ENCODE measurements at regions of chr6 and their contacts with region 1.

Region 1: DNA sequence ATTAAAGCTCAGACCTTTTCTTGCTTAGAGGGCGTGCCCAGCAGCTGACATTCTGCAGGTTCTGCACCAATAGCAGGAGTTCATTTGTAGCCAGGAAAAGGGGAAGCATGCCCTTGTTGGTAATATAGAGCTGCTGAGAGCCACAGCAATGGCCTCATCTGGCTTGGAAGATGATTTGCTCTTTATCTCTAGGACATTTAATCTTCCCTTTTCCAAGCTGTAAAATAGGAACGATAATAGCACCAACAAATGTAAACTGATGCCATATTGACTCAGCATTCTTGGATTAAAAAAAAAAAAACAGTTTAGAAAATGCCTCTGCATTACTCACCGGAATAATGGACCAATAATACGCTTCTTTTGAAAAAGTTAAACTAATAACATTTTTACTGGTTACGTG is 93.4 kb upstream of the SLC2A12 start:
- DNase-seq: peak; percentile 62
- ATAC-seq: peak; percentile 71
- H3K4me3 ChIP-seq: peak overlapping the region; percentile 40; the same call in 1 of the 2 replicates
- H3K27ac ChIP-seq: peak overlapping the region; percentile 30; the same call in 1 of the 2 replicates
- H3K4me1 ChIP-seq: peaks cover 17% of the 10 kb centered on the region
- H3K27me3 ChIP-seq: no peaks in the 10 kb centered on the region
- CTCF ChIP-seq: no peak

Region 2: GRCh38 chr6:134111062-134111677 is 34.6 kb before region 1 on chr6:
- CTCF ChIA-PET with region 1: no interaction called
- POLR2A ChIA-PET with region 1: no interaction called
- intact Hi-C with region 1: no loop called
- DNase-seq: peak; percentile 77
- ATAC-seq: peak; percentile 23; the same call in 1 of the 2 replicates
- H3K4me3 ChIP-seq: no peak overlapping the region
- H3K27ac ChIP-seq: no peak overlapping the region
- H3K4me1 ChIP-seq: peaks cover 14% of the 10 kb centered on the region
- H3K27me3 ChIP-seq: no peaks in the 10 kb centered on the region
- CTCF ChIP-seq: peak; percentile 91

Region 3: DNA sequence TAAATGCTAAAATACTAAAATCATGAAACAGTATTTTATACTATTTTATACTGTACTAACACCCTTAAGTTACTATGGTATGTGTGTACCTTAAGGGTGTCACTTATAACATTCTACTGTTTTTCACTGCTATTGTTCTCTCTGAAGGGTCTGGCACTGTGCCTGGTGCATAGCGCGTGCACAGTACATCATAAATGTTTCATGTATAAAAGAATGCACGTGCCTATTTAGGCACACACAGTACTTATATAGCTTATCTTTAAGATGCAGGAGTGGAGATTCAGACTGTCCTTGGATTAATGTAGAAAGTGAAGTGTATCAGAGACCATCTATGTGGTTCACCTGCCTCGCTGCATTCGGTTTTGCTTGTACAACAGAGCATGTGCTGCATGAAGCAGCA is 236.2 kb after region 1 on chr6:
- CTCF ChIA-PET with region 1: interaction called, 10 read pairs
- POLR2A ChIA-PET with region 1: no interaction called
- intact Hi-C with region 1: no loop called
- DNase-seq: no peak
- ATAC-seq: no peak
- H3K4me3 ChIP-seq: no peak overlapping the region
- H3K27ac ChIP-seq: no peak overlapping the region
- H3K4me1 ChIP-seq: peaks cover 12% of the 10 kb centered on the region
- H3K27me3 ChIP-seq: no peaks in the 10 kb centered on the region
- CTCF ChIP-seq: no peak

Region 4: GRCh38 chr6:134928151-134928900 is 782.5 kb after region 1 on chr6:
- CTCF ChIA-PET with region 1: no interaction called
- POLR2A ChIA-PET with region 1: interaction called, 16 read pairs
- intact Hi-C with region 1: no loop called
- DNase-seq: no peak
- ATAC-seq: no peak
- H3K4me3 ChIP-seq: no peak overlapping the region
- H3K27ac ChIP-seq: no peak overlapping the region
- H3K4me1 ChIP-seq: no peaks in the 10 kb centered on the region
- H3K27me3 ChIP-seq: no peaks in the 10 kb centered on the region
- CTCF ChIP-seq: no peak